Activated T-helper 1 cell treated with anti-CD3 and anti-CD28 coated beads, Interleukin-12 subunit alpha, Interleukin-12 subunit beta, Interleukin-2, Interleukin-4 antibody, amounts not matched to agents 30 ng/mL and 10 ng/mL and 1 ng/mL, durations not matched to agents 14 hours and 24 hours and 36 hours (primary cell): ENCODE measurements at regions of chr11 and their contacts with region 1.

Region 1: GRCh38 chr11:35126000-35126878 is 12.7 kb upstream of the CD44 start:
- DNase-seq: no peak
- H3K4me3 Mint-ChIP-seq: peak overlapping the region; percentile 64
- H3K27ac Mint-ChIP-seq: peak overlapping the region; percentile 84
- H3K4me1 Mint-ChIP-seq: peaks cover 58% of the 10 kb centered on the region
- H3K27me3 Mint-ChIP-seq: no peaks in the 10 kb centered on the region

Region 2: DNA sequence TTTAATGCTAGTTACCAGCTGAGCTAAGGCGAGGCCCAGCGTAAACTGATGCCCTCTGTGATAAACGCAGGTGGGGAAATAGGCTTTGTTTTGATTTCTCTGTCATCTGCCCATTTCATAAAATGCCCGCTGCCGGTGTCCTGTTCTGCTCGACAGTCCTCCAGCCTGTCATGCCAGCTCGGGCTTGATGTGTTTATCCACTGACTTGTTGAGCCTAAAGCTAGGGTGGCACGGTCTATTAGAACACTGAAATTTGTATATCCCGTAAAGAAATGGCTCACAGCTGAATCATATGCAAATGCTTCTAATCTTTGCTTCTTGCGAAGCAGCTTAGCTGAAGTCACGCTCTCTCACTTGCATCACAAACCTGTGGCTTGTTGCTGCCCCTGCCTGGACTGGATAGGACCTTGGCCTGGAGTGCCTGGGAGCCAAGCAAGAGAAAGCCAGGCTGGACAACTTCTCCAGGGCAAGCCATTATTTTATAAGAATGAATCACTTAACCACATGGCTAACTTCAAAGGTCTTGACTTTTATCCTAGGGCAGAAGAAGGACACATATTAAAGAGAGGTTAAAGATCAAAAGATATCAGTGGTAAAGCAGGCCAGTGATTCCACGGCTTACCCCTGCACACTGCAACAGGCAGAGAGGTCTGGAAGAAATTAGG is 472.3 kb before region 1 on chr11:
- intact Hi-C with region 1: loop called (anchors 5 kb)
- DNase-seq: no peak
- H3K4me3 Mint-ChIP-seq: no peak overlapping the region
- H3K27ac Mint-ChIP-seq: no peak overlapping the region
- H3K4me1 Mint-ChIP-seq: peaks cover 21% of the 10 kb centered on the region
- H3K27me3 Mint-ChIP-seq: peaks cover 66% of the 10 kb centered on the region

Region 3: GRCh38 chr11:35064114-35064800 is 62.0 kb before region 1 on chr11:
- intact Hi-C with region 1: no loop called
- DNase-seq: no peak
- H3K4me3 Mint-ChIP-seq: no peak overlapping the region
- H3K27ac Mint-ChIP-seq: no peak overlapping the region
- H3K4me1 Mint-ChIP-seq: peaks cover 33% of the 10 kb centered on the region
- H3K27me3 Mint-ChIP-seq: no peaks in the 10 kb centered on the region

Region 4: DNA sequence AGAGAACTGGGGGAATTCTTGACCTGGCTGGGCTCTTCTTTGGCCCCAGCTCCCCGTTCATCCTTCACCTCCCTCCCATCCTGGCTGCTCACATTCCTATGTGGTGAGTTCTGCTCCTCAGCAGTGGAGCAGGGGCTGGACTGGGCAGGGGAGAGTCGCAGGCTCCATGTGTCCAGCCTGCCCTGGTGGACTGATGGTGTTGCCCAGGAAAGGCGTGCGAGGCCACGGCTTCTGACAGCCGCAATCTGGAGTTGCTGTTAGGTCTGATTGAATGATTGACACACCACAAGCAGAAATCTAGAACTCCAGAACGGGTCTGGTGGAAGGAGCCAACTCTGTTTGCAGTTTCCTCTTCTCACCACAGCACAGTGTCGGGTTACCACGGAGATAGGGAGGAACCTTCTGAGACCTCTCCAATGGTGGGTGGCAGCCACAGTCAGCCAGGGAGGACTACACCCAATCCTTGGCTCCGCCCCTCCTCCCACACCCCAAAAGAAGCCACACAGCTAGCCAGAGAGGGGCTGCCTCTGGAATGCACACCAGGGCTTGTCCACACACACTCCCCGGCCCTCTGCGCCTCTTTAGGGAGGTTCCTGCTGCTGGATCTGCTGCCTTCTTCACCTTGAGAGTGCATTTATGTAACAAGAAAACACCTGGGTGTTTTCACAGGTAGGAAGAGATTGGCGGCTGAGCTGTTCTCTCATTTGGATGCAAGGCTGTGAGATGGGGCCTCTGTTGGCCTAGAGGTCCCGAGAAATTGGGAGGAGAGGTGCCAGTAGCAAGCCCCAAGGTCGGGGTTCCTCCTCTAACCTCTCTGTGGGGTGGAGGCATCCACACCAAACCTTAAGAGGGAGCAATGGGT is 43.7 kb before region 1 on chr11:
- intact Hi-C with region 1: loop called (anchors 1 kb)
- DNase-seq: peak; percentile 85
- H3K4me3 Mint-ChIP-seq: peak overlapping the region; percentile 56
- H3K27ac Mint-ChIP-seq: peak overlapping the region; percentile 91
- H3K4me1 Mint-ChIP-seq: peaks cover 82% of the 10 kb centered on the region
- H3K27me3 Mint-ChIP-seq: no peaks in the 10 kb centered on the region

Region 5: GRCh38 chr11:35138943-35139721 is 12.9 kb after region 1 on chr11 and contains the start of gene CD44:
- intact Hi-C with region 1: loop called (anchors 1 kb)
- DNase-seq: peak; percentile 58
- H3K4me3 Mint-ChIP-seq: peak within 1 kb of the TSS; percentile 97
- H3K27ac Mint-ChIP-seq: peak within 1 kb of the TSS; percentile 93
- H3K4me1 Mint-ChIP-seq: peaks cover 55% of the 10 kb centered on the region
- H3K27me3 Mint-ChIP-seq: no peaks in the 10 kb centered on the region
- total RNA-seq, gene CD44: 547 and 550 TPM in 2 replicates

Region 6: DNA sequence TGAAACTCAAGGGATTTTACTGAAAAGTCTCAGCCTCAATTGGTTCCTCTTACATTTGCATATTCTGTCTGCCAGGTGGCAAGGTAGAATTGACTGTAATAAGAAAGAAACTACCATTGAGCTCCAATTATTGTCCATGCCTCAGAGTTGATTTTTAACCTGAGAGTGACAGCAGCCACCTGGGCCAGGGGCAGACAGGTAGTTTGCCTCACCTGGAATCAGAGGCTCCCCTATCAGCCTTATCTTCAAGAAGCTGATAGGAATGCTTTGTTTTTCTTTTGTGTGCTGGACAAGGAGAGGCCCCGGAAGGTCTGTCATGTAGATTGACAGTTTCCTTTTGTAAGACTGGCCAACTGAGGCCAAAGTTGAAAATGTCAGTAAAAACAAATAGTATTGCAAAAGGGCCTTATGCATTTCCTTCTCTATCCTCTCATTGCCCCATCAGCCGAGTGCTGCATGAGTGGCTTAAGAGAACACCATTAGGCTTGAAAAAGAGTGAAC is 46.8 kb after region 1 on chr11:
- intact Hi-C with region 1: loop called (anchors 1 kb)
- DNase-seq: no peak
- H3K4me3 Mint-ChIP-seq: peak overlapping the region; percentile 56
- H3K27ac Mint-ChIP-seq: peak overlapping the region; percentile 75
- H3K4me1 Mint-ChIP-seq: peaks cover 92% of the 10 kb centered on the region
- H3K27me3 Mint-ChIP-seq: no peaks in the 10 kb centered on the region

Region 7: DNA sequence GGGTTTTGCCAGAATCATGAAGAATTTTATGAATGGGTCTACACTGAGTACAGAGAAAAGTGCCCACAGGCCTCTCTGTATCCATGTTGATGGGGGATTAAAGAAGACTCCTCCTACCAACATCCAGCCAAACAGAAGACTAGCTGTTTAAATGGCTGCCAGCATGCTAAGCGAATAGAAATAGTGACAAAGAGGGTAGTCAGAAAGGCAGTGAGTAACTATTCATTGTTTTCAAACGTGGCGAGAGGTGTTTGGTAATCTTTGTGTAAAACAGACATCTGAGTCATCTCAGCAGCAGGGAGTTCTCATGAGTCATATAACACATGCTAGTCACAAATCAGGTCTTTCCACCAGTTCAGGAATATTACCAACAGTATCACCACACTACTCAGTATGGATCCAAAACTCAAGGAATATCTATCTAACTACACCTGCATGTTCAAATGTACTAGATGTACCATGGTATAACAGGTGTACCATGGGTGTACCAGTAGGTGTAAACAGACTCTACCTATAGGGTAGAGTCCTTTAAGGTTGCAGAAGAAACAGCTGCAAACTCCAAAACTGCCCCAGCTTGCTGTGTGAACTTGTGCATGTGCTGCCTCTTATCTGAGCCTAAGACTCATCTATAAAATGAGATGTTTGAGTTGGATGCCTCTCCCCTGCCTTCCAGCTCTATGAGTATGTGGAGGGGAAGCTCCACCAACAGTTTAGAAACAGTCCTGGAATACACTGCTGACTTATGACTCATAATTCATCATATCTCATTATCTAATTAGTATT is 211.1 kb after region 1 on chr11:
- intact Hi-C with region 1: loop called (anchors 1 kb)
- DNase-seq: no peak
- H3K4me3 Mint-ChIP-seq: no peak overlapping the region
- H3K27ac Mint-ChIP-seq: peak overlapping the region; percentile 6
- H3K4me1 Mint-ChIP-seq: peaks cover 40% of the 10 kb centered on the region
- H3K27me3 Mint-ChIP-seq: peaks cover 3% of the 10 kb centered on the region